Naive thymus-derived CD4-positive, alpha-beta T cell (primary cell): ENCODE measurements at regions of chr1 and their contacts with region 1.

Region 1: DNA sequence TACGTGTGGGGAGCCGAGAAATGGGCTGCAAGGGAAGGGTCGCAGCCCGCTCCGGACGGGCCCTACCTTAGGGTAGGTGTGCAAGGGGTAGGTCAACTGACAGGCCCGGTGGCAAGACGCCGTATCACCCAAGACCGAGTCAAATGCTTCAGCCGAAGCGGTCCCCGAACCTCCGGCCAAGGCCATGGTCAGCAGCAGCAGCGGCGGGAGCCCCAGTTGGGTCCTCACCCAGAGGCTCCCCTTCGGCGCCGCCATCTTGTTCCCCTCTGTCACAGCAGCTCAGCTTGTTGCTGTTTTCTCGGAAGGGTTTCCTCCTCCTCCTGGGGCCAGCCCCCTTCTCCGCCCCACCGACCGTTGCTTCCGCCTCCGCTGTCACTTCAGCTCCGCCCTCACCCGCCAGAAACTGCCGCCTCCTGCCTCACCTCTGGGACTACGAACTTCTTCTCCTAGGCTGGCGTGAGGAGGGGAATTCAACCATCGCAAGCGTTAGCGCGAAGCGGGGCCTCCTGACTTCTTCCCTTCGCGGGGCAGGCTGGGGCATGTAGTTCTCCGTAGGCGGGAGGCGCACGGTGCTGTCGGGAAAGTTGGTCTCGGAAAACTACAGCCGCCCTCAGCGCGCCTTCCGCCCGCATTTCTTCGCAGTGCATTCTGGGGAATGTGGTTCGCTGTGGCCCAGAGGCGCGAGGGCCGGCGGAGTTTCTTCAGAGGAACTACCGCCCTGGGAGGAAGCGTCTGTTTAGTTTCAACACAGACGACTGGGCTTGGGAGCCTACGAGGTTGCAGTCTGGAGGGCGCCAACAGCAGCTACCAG is at the starts of genes TCEANC2 and TMEM59:
- DNase-seq: peak; percentile 84 to 99 (median 98)
- ATAC-seq: peak; percentile 94
- H3K4me3 ChIP-seq: peak within 1 kb of the TSS; percentile 94
- H3K4me3 Mint-ChIP-seq: no peak within 1 kb of the TSS
- H3K27ac ChIP-seq: peak within 1 kb of the TSS; percentile 92
- H3K27ac Mint-ChIP-seq: no peak within 1 kb of the TSS
- H3K4me1 ChIP-seq: peaks cover 23 to 34% of the 10 kb centered on the region in 2 donors
- H3K4me1 Mint-ChIP-seq: peaks cover 27 to 62% (median 52%) of the 10 kb centered on the region in 7 donors
- H3K27me3 ChIP-seq: no peaks in the 10 kb centered on the region
- H3K27me3 Mint-ChIP-seq: no peaks in the 10 kb centered on the region
- total RNA-seq, gene TCEANC2: 6.3 to 15.1 (median 12.2) TPM
- total RNA-seq, gene TMEM59: 127 to 197 (median 183) TPM

Region 2: GRCh38 chr1:53238197-53239155 is 814.7 kb before region 1 on chr1 and contains the start of gene MAGOH:
- CTCF ChIA-PET with region 1: no interaction called
- POLR2A ChIA-PET with region 1: no interaction called
- intact Hi-C with region 1: loop called in 1 of 2 experiments (anchors 2 kb)
- DNase-seq: peak; percentile 90 to 96 (median 95)
- ATAC-seq: peak; percentile 98
- H3K4me3 ChIP-seq: peak within 1 kb of the TSS; percentile 97
- H3K4me3 Mint-ChIP-seq: peak within 1 kb of the TSS; percentile 96 to 99 (median 98)
- H3K27ac ChIP-seq: peak within 1 kb of the TSS; percentile 94
- H3K27ac Mint-ChIP-seq: peak within 1 kb of the TSS; percentile 92 to 99 (median 98)
- H3K4me1 ChIP-seq: peaks cover 18 to 19% of the 10 kb centered on the region in 2 donors
- H3K4me1 Mint-ChIP-seq: peaks cover 18 to 47% (median 32%) of the 10 kb centered on the region in 7 donors
- H3K27me3 ChIP-seq: no peaks in the 10 kb centered on the region
- H3K27me3 Mint-ChIP-seq: peaks cover 0 to 2% (median 0%) of the 10 kb centered on the region in 5 donors
- total RNA-seq, gene MAGOH: 37.7 to 76.7 (median 52.3) TPM

Region 3: DNA sequence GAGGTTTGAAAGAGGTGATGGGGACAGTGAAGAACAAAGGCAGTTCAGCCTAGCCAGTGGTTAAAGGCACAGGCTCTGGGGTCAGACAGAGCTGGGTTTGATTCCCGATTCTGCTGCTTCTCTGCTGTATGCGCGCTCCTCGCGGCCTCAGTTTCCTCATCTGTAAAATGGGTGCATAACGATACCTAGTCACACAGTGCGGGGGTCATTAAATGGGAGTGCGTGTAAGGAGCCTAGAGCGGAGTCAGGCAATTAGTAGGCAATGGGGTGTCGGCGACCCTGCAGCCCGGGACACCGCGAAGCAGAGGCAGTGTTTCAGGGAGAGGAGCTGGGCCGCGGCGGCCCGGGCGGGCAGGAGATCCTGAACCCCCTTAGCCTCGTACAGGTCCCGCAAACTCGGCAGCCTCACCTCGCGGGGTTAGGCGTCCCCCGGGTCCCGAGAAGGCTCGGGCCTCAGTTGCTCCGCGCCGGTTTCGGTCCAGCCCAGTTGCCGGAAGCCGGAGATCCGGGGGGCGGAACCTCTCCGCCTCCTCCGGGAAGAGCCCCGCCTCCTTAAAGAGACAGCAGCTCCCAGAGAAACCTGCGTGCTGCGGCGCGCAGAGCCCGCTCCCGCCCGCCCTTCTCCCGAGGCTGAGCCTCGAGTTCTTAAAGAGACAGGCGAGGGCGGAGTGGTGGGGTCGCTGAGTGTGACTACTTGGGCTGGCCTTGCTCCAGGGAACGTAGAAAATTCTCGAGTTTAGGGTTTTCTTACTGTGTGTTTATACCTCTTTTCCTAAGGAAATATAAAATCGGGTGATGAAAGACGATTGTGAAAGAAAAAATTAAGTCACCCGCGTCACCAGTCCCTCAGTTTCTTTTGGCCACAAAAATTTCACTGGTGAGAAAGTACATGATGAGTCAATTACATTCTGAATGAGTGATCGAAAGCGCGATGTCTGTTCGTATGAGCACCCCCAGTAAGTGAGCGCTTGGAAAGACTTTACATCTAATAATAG is 163.5 kb before region 1 on chr1 and contains the start of gene YIPF1:
- CTCF ChIA-PET with region 1: no interaction called
- POLR2A ChIA-PET with region 1: interaction called, 3 read pairs
- intact Hi-C with region 1: loop called (anchors 1 kb)
- DNase-seq: peak; percentile 61 to 88 (median 85)
- ATAC-seq: peak; percentile 98
- H3K4me3 ChIP-seq: peak within 1 kb of the TSS; percentile 79
- H3K4me3 Mint-ChIP-seq: peak within 1 kb of the TSS; percentile 88 to 98 (median 96)
- H3K27ac ChIP-seq: peak within 1 kb of the TSS; percentile 75
- H3K27ac Mint-ChIP-seq: peak within 1 kb of the TSS; percentile 89 to 97 (median 95)
- H3K4me1 ChIP-seq: peaks cover 20 to 23% of the 10 kb centered on the region in 2 donors
- H3K4me1 Mint-ChIP-seq: peaks cover 26 to 55% (median 51%) of the 10 kb centered on the region in 7 donors
- H3K27me3 ChIP-seq: no peaks in the 10 kb centered on the region
- H3K27me3 Mint-ChIP-seq: peaks cover 0 to 2% (median 0%) of the 10 kb centered on the region in 5 donors
- total RNA-seq, gene YIPF1: 10.5 to 18.0 (median 16.3) TPM

Region 4: DNA sequence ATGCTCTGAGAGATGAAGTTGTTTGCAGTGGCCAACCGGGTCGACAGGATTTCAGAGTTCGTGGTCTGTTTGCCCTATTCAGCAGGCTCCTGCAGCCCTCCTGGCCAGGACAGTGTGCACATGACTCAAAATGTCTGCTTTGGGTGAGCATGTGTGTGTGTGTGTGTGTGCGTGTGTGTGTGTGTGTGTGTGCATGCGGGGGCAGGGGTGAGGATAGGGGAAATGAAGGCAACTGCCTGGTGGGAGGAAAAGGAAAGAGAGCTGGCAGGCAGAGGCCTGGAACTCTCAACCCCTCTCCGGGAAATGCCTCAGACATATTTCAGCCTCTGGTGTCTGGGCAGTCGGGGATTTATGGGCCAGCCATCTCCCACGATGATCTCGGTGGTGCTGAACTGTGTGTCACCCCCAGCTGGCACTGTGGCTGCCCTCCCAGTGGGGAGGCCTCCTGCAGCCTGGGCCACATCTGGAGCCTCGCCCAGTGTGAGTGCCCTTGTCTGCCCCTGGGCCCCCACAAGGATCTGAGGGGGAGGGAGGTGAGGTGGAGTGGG is 84.4 kb after region 1 on chr1:
- CTCF ChIA-PET with region 1: no interaction called
- POLR2A ChIA-PET with region 1: no interaction called
- intact Hi-C with region 1: no loop called
- DNase-seq: no peak
- ATAC-seq: no peak
- H3K4me3 ChIP-seq: no peak overlapping the region
- H3K4me3 Mint-ChIP-seq: no peak overlapping the region
- H3K27ac ChIP-seq: no peak overlapping the region
- H3K27ac Mint-ChIP-seq: peak overlapping the region in 1 of 9 donors; percentile 66
- H3K4me1 ChIP-seq: no peaks in the 10 kb centered on the region
- H3K4me1 Mint-ChIP-seq: no peaks in the 10 kb centered on the region
- H3K27me3 ChIP-seq: no peaks in the 10 kb centered on the region
- H3K27me3 Mint-ChIP-seq: peaks cover 0 to 2% (median 0%) of the 10 kb centered on the region in 5 donors

Region 5: DNA sequence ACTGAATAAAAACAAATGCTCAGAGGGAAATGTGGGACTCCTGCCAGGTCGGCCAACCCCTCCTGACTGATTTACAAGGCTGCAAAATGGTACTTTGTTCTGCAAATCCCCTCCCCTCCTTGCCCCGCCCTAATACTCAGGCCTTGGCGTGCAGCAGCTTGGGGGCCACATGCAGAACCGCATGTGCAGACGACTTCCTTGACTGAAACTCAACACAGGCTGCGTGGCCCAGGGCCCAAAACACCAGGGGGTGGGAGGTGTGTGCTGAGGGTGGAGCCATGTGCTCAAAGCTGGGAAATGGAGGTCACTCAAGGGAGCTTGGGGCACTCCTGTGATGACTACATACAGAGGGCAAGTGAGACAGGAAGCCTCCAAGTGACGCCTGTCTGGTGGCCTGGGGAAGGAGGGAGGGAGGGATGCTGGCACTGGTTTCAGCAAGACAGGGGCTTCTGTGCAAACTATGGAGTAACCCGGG is 234.1 kb after region 1 on chr1:
- CTCF ChIA-PET with region 1: no interaction called
- POLR2A ChIA-PET with region 1: interaction called, 4 read pairs
- intact Hi-C with region 1: loop called (anchors 5 to 10 kb)
- DNase-seq: peak; percentile 21 to 82 (median 73)
- ATAC-seq: peak; percentile 76
- H3K4me3 ChIP-seq: peak overlapping the region; percentile 21
- H3K4me3 Mint-ChIP-seq: peak overlapping the region; percentile 79 to 90 (median 87)
- H3K27ac ChIP-seq: peak overlapping the region; percentile 85
- H3K27ac Mint-ChIP-seq: peak overlapping the region; percentile 87 to 99 (median 96)
- H3K4me1 ChIP-seq: peaks cover 6 to 90% of the 10 kb centered on the region in 2 donors
- H3K4me1 Mint-ChIP-seq: peaks cover 59 to 100% (median 94%) of the 10 kb centered on the region in 7 donors
- H3K27me3 ChIP-seq: no peaks in the 10 kb centered on the region
- H3K27me3 Mint-ChIP-seq: no peaks in the 10 kb centered on the region

Region 6: DNA sequence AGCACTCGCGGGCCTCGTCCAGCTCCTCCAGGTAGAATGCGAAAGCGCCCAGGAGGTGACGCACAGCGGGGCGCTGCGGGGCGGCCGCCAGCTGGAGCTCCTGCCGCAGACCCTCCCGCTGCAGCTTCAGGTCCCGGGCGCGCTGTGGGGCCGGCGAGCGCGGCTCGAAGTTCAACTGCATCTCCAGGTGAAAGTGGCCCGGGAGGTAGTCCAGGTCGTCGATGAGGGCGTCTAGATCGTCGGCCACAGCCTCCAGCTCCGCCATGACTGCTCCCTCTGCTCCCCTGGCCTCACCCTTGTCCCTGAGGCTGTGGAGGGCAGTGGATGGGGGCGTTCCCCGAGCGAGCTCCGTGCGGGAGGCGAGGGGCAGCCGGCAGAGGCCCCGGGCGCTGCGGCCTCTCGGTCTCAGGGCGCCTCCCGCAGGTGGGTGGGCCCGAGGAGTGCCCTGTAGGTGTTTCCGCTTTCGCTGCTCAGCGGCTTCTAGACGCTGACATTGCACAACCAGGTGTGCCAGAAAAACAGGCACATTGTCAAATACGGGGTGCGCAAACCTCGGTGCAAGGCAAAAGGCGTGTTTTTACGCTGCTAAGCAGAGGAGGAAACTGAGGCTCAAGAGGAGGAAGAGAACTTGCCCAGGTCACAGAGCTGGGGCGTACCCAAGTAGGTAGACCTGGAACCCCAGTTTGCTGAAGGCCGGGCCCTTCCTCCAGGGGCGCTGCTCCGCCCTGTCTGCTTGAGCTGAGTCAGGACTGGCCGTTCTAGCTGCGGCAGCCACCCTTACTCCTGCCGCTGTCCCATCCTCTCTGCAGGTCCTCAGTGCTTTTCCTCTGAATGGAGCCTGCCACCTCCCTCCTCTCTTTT is 748.0 kb after region 1 on chr1 and contains the start of gene TTC22:
- CTCF ChIA-PET with region 1: interaction called, 3 read pairs
- POLR2A ChIA-PET with region 1: interaction called, 3 read pairs
- intact Hi-C with region 1: loop called (anchors 1 to 2 kb)
- DNase-seq: peak; percentile 49 to 71 (median 64)
- ATAC-seq: peak; percentile 91
- H3K4me3 ChIP-seq: peak within 1 kb of the TSS; percentile 94
- H3K4me3 Mint-ChIP-seq: peak within 1 kb of the TSS; percentile 90 to 99 (median 96)
- H3K27ac ChIP-seq: peak within 1 kb of the TSS; percentile 74
- H3K27ac Mint-ChIP-seq: peak within 1 kb of the TSS; percentile 82 to 97 (median 90)
- H3K4me1 ChIP-seq: peaks cover 38 to 44% of the 10 kb centered on the region in 2 donors
- H3K4me1 Mint-ChIP-seq: peaks cover 32 to 77% (median 56%) of the 10 kb centered on the region in 7 donors
- H3K27me3 ChIP-seq: no peaks in the 10 kb centered on the region
- H3K27me3 Mint-ChIP-seq: no peaks in the 10 kb centered on the region
- total RNA-seq, gene TTC22: 7.0 to 16.6 (median 9.8) TPM